ENCODE measurements at regions of chr1 and their contacts with region 1.

Region 1: GRCh38 chr1:56758135-56758534 is 61.1 kb downstream of the FYB2 start:
- DNase-seq: peak; percentile 21 to 47
- H3K4me3 ChIP-seq: no peak overlapping the region
- H3K27ac ChIP-seq: no peak overlapping the region
- H3K4me1 ChIP-seq: no peaks in the 10 kb centered on the region
- H3K27me3 ChIP-seq: no peaks in the 10 kb centered on the region
- CTCF ChIP-seq: peak; percentile 63 to 78 (median 70)
- EP300 ChIP-seq: no peak
- POLR2A ChIP-seq: no peak
- RAD21 ChIP-seq: peak; percentile 81 to 86

Region 2: GRCh38 chr1:56696663-56697062 is 61.5 kb before region 1 on chr1:
- CTCF ChIA-PET with region 1: no interaction called
- POLR2A ChIA-PET with region 1: no interaction called
- DNase-seq: no peak
- H3K4me3 ChIP-seq: no peak overlapping the region
- H3K27ac ChIP-seq: no peak overlapping the region
- H3K4me1 ChIP-seq: no peaks in the 10 kb centered on the region
- H3K27me3 ChIP-seq: no peaks in the 10 kb centered on the region
- CTCF ChIP-seq: no peak
- EP300 ChIP-seq: no peak
- POLR2A ChIP-seq: no peak
- RAD21 ChIP-seq: no peak

Region 3: GRCh38 chr1:56774067-56774609 is 16.0 kb after region 1 on chr1:
- CTCF ChIA-PET with region 1: interaction called, 13 read pairs
- POLR2A ChIA-PET with region 1: no interaction called
- DNase-seq: no peak
- H3K4me3 ChIP-seq: no peak overlapping the region
- H3K27ac ChIP-seq: no peak overlapping the region
- H3K4me1 ChIP-seq: no peaks in the 10 kb centered on the region
- H3K27me3 ChIP-seq: no peaks in the 10 kb centered on the region
- CTCF ChIP-seq: no peak
- EP300 ChIP-seq: no peak
- POLR2A ChIP-seq: no peak
- RAD21 ChIP-seq: no peak

Region 4: GRCh38 chr1:56798053-56798471 is 39.9 kb after region 1 on chr1:
- CTCF ChIA-PET with region 1: interaction called, 39 read pairs
- POLR2A ChIA-PET with region 1: no interaction called
- DNase-seq: no peak
- H3K4me3 ChIP-seq: no peak overlapping the region
- H3K27ac ChIP-seq: no peak overlapping the region
- H3K4me1 ChIP-seq: peaks cover 2 to 11% (median 5%) of the 10 kb centered on the region in 4 experiments; a peak in 4 of 7 replicates
- H3K27me3 ChIP-seq: peaks cover 0 to 4% (median 0%) of the 10 kb centered on the region in 4 experiments; a peak in 2 of 7 replicates
- CTCF ChIP-seq: no peak
- EP300 ChIP-seq: no peak
- POLR2A ChIP-seq: no peak
- RAD21 ChIP-seq: no peak